ENCODE measurements at regions of chr10 and their contacts with region 1.

Region 1: DNA sequence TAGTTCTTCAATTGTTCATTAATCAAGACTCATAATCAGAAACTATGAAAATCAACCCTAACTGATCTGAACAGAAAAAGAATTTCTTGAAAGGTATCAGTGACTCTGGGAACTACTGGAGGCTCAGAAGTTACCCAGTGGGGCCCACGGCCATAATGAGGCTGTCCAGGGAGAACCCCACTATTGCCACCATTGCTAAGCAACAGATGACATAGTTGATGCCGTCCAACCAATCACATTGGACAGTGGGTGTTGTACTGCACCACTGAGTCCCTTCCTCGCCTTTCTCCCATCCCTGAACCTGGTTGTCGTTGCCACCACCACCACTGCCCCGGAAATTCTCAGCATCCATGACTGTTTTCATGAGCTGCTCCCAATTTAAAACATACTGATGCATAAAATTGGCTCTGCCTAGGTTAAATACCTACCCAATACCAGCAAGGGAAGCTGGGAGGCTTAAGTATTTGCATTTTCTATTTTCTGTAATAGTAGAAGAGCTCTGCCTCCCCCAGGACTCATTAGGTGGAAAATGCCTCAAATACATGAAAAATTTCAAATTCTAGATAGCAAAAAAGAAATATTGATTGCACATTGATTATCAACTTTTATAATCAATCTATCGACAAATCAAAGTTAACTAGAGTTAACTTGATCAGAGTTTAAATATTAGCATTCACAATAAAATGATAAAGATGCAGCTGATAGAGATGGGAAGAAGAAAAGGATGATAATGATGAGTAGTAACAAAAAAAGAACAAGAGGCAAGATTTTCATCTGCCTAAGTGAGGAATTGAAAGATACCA is 26.8 kb upstream of the USP6NL start:
- DNase-seq: no peak
- ATAC-seq: no peak
- H3K4me3 ChIP-seq: no peak overlapping the region
- H3K27ac ChIP-seq: no peak overlapping the region
- H3K4me1 ChIP-seq: no peaks in the 10 kb centered on the region
- H3K27me3 ChIP-seq: peaks cover 0 to 8% (median 0%) of the 10 kb centered on the region in 7 donors
- CTCF ChIP-seq: no peak

Region 2: DNA sequence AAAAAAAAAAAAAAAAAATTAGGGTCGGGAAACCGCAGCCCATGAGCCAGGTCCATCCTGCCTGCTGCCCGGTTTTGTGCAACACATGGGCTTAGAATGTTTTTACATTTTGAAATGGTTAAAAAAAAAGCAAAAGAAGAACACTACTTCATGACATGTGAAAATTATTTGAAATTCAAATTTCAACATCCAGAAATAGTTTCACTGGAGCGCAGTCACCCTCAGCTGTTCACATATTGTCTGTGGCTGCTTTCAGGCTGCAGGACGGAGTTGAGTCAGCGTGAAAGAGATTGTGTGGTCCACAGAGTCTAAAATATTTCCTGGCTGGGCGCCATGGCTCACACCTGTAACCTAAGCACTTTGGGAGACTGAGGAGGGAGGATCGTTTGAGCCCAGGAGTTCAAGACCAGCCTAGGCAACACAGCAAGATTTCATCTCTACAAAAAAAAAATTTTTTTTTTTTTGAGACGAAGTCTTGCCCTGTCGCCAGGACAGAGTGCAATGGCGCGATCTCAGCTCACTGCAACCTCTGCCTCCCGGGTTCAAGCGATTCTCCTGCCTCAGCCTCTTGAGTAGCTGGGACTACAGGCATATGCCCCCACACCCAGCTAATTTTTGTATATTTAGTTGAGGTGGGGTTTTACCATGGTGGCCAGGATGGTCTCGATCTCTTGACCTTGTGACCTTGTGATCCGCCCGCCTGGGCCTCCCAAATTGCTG is 40.0 kb after region 1 on chr10:
- intact Hi-C with region 1: loop called in 1 of 10 experiments (anchors 5 kb)
- DNase-seq: no peak
- ATAC-seq: peak in 1 of 8 donors; percentile 40
- H3K4me3 ChIP-seq: no peak overlapping the region
- H3K27ac ChIP-seq: no peak overlapping the region
- H3K4me1 ChIP-seq: peaks cover 0 to 29% (median 9%) of the 10 kb centered on the region in 9 donors
- H3K27me3 ChIP-seq: peaks cover 0 to 39% (median 7%) of the 10 kb centered on the region in 7 donors
- CTCF ChIP-seq: no peak